B cell (primary cell): ENCODE measurements at regions of chr5 and their contacts with region 1.

Region 1: DNA sequence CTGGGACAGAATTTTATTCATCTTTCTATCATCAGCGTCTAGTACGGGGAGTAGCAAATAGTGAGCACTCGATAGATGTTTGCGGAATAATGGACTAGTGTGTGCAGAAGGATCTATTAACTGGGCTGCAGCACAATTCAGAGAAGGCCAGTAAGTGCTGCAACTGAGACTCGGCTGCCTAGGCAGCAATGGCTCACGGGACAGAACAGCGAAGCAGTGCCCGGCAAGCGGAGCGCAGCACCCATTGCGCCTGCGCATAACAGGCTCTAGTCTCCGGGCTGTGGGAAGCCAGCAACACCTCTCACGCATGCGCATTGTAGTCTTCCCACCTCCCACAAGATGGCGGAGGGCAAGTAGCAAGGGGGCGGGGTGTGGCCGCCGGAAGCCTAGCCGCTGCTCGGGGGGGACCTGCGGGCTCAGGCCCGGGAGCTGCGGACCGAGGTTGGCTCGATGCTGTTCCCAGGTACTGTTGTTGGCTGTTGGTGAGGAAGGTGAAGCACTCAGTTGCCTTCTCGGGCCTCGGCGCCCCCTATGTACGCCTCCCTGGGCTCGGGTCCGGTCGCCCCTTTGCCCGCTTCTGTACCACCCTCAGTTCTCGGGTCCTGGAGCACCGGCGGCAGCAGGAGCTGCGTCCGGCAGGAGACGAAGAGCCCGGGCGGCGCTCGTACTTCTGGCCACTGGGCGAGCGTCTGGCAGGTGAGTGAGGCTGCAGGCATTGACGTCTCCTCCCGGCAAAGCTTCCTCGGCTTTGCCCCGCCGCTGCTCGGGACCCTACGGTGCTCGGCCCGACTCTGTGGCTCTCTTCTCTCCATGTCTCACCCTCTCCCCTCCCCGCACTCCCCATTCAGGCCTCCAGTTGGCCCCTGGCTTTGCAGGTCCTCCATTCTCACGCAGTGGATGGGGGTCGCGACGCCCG is 30.2 kb upstream of the APC start:
- DNase-seq: peak; percentile 98
- ATAC-seq: peak; percentile 93
- H3K4me3 ChIP-seq: peak overlapping the region; percentile 68 to 91 (median 81)
- H3K4me3 Mint-ChIP-seq: peak overlapping the region; percentile 95
- H3K27ac ChIP-seq: peak overlapping the region; percentile 66 to 85
- H3K27ac Mint-ChIP-seq: peak overlapping the region; percentile 96
- H3K4me1 ChIP-seq: peaks cover 22 to 31% of the 10 kb centered on the region in 2 donors
- H3K4me1 Mint-ChIP-seq: peaks cover 51% of the 10 kb centered on the region
- H3K27me3 ChIP-seq: no peaks in the 10 kb centered on the region
- H3K27me3 Mint-ChIP-seq: no peaks in the 10 kb centered on the region
- CTCF ChIP-seq: no peak

Region 2: DNA sequence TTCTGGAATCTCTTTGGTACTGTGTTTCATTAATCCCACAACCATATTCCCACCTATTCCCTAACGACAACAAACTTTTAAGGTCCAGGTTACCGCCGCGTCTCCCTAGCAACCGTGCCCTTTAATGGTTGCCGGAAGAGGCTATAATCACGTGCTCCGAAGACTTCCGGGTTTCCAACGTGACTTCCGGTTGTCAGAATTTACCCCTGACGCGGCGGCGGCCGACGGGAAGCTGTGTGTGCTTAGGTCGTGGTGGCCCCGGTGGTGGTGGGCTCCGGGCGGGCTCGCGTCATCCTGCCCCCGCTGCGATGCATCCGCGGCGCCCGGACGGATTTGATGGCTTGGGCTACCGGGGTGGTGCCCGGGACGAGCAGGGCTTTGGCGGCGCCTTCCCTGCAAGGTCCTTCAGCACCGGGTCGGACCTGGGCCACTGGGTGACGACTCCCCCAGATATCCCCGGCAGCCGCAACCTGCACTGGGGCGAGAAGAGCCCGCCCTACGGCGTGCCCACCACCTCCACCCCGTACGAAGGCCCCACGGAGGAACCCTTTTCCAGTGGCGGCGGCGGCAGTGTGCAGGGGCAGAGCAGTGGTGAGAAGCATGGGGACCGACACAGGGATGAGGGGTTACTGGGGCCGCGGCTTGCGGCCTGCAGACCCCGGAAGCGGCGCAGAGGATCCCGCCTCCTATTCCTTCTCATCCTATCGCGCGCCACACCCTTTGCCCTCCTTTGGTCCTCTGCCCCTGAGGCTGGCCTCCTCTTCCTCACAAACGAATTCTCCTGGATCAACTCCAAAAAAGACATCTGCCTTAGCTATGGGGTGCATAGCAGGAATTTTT is 1968.4 kb before region 1 on chr5 and contains the start of gene SLC25A46:
- CTCF ChIA-PET with region 1: no interaction called
- POLR2A ChIA-PET with region 1: no interaction called
- intact Hi-C with region 1: loop called (anchors 5 kb)
- DNase-seq: peak; percentile 96
- ATAC-seq: peak; percentile 82
- H3K4me3 ChIP-seq: peak within 1 kb of the TSS; percentile 72 to 98 (median 92)
- H3K4me3 Mint-ChIP-seq: peak within 1 kb of the TSS; percentile 100
- H3K27ac ChIP-seq: peak within 1 kb of the TSS; percentile 83 to 97
- H3K27ac Mint-ChIP-seq: peak within 1 kb of the TSS; percentile 99
- H3K4me1 ChIP-seq: peaks cover 14 to 17% of the 10 kb centered on the region in 2 donors
- H3K4me1 Mint-ChIP-seq: peaks cover 29% of the 10 kb centered on the region
- H3K27me3 ChIP-seq: peaks cover 0 to 4% (median 0%) of the 10 kb centered on the region in 4 experiments
- H3K27me3 Mint-ChIP-seq: peaks cover 10% of the 10 kb centered on the region
- CTCF ChIP-seq: no peak
- total RNA-seq, gene SLC25A46: 36.9 and 38.0 TPM in 2 replicates

Region 3: GRCh38 chr5:111757355-111758283 is 949.8 kb before region 1 on chr5:
- CTCF ChIA-PET with region 1: no interaction called
- POLR2A ChIA-PET with region 1: no interaction called
- intact Hi-C with region 1: loop called (anchors 5 kb)
- DNase-seq: peak; percentile 90
- ATAC-seq: peak; percentile 80
- H3K4me3 ChIP-seq: peak overlapping the region; percentile 68 to 83 (median 77)
- H3K4me3 Mint-ChIP-seq: peak overlapping the region; percentile 92
- H3K27ac ChIP-seq: peak overlapping the region; percentile 76 to 81
- H3K27ac Mint-ChIP-seq: peak overlapping the region; percentile 91
- H3K4me1 ChIP-seq: peaks cover 20 to 22% of the 10 kb centered on the region in 2 donors
- H3K4me1 Mint-ChIP-seq: peaks cover 21% of the 10 kb centered on the region
- H3K27me3 ChIP-seq: no peaks in the 10 kb centered on the region
- H3K27me3 Mint-ChIP-seq: peaks cover 7% of the 10 kb centered on the region
- CTCF ChIP-seq: no peak

Region 4: GRCh38 chr5:112737463-112738190 is 30.2 kb after region 1 on chr5 and contains the start of gene APC:
- CTCF ChIA-PET with region 1: no interaction called
- POLR2A ChIA-PET with region 1: interaction called, 3 read pairs
- intact Hi-C with region 1: loop called (anchors 1 kb)
- DNase-seq: peak; percentile 82
- ATAC-seq: peak; percentile 93
- H3K4me3 ChIP-seq: peak within 1 kb of the TSS; percentile 61 to 93 (median 71)
- H3K4me3 Mint-ChIP-seq: peak within 1 kb of the TSS; percentile 98
- H3K27ac ChIP-seq: peak within 1 kb of the TSS in 1 of 2 donors; percentile 52
- H3K27ac Mint-ChIP-seq: peak within 1 kb of the TSS; percentile 83
- H3K4me1 ChIP-seq: peaks cover 7 to 12% of the 10 kb centered on the region in 2 donors
- H3K4me1 Mint-ChIP-seq: peaks cover 26% of the 10 kb centered on the region
- H3K27me3 ChIP-seq: no peaks in the 10 kb centered on the region
- H3K27me3 Mint-ChIP-seq: no peaks in the 10 kb centered on the region
- CTCF ChIP-seq: no peak
- total RNA-seq, gene APC: 55.8 and 60.3 TPM in 2 replicates

Region 5: GRCh38 chr5:112860929-112861637 is 153.6 kb after region 1 on chr5 and contains the start of gene SRP19:
- CTCF ChIA-PET with region 1: no interaction called
- POLR2A ChIA-PET with region 1: no interaction called
- intact Hi-C with region 1: loop called (anchors 2 kb)
- DNase-seq: peak; percentile 94
- ATAC-seq: peak; percentile 94
- H3K4me3 ChIP-seq: peak within 1 kb of the TSS; percentile 77 to 99 (median 95)
- H3K4me3 Mint-ChIP-seq: peak within 1 kb of the TSS; percentile 98
- H3K27ac ChIP-seq: peak within 1 kb of the TSS; percentile 83 to 92
- H3K27ac Mint-ChIP-seq: peak within 1 kb of the TSS; percentile 93
- H3K4me1 ChIP-seq: peaks cover 17 to 19% of the 10 kb centered on the region in 2 donors
- H3K4me1 Mint-ChIP-seq: peaks cover 30% of the 10 kb centered on the region
- H3K27me3 ChIP-seq: peaks cover 0 to 2% (median under 1%) of the 10 kb centered on the region in 4 experiments
- H3K27me3 Mint-ChIP-seq: peaks cover 17% of the 10 kb centered on the region
- CTCF ChIP-seq: no peak
- total RNA-seq, gene SRP19: 33.8 and 41.5 TPM in 2 replicates

Region 6: GRCh38 chr5:112976432-112977309 is 269.2 kb after region 1 on chr5 and contains the start of gene DCP2:
- CTCF ChIA-PET with region 1: no interaction called
- POLR2A ChIA-PET with region 1: no interaction called
- intact Hi-C with region 1: loop called (anchors 1 kb)
- DNase-seq: peak; percentile 98
- ATAC-seq: peak; percentile 97
- H3K4me3 ChIP-seq: peak within 1 kb of the TSS; percentile 77 to 99 (median 96)
- H3K4me3 Mint-ChIP-seq: peak within 1 kb of the TSS; percentile 97
- H3K27ac ChIP-seq: peak within 1 kb of the TSS; percentile 74 to 84
- H3K27ac Mint-ChIP-seq: peak within 1 kb of the TSS; percentile 88
- H3K4me1 ChIP-seq: peaks cover 14 to 28% of the 10 kb centered on the region in 2 donors
- H3K4me1 Mint-ChIP-seq: peaks cover 43% of the 10 kb centered on the region
- H3K27me3 ChIP-seq: no peaks in the 10 kb centered on the region
- H3K27me3 Mint-ChIP-seq: no peaks in the 10 kb centered on the region
- CTCF ChIP-seq: no peak
- total RNA-seq, gene DCP2: 64.5 and 73.1 TPM in 2 replicates